ENCODE measurements at regions of chr5 and their contacts with region 1.

Region 1: DNA sequence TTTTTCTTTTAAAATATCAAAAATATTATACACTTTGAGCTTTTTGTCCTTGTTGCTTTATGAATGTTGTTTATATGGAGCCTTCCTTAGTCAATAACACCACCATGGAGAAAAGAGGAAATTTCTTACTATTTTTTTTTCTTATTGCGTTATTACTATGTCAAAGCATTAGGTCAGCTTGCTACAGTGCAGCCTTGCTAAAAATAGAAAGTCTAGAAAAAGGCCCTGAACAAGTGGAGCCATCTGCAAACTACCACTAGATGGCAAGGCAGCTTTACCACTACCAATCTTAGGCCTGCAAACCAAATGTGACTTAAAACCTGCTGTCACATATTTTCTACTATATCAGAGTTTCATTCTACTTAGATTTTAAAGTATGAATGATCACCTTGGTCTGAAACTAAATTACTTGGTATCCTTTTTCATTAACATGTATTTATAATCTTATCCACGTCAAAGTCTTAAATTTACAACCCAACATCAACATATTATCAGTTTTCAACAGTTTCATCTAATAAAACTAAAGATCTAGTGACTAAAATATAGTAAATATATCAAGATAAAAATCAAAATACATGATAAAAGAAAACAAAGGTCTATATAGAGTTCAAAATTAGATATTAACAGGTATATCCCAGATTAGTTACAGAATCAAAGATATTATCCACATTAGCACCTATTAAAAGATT is 113.1 kb upstream of the ACOT12 start:
- DNase-seq: peak; percentile 55 to 72
- ATAC-seq: peak; percentile 100
- H3K4me3 ChIP-seq: no peak overlapping the region
- H3K27ac ChIP-seq: peak overlapping the region; percentile 33 to 50 (median 44)
- H3K4me1 ChIP-seq: peaks cover 4 to 11% of the 10 kb centered on the region in 2 donors
- H3K27me3 ChIP-seq: no peaks in the 10 kb centered on the region
- CTCF ChIP-seq: peak; percentile 69 to 94 (median 86)
- POLR2A ChIP-seq: no peak

Region 2: DNA sequence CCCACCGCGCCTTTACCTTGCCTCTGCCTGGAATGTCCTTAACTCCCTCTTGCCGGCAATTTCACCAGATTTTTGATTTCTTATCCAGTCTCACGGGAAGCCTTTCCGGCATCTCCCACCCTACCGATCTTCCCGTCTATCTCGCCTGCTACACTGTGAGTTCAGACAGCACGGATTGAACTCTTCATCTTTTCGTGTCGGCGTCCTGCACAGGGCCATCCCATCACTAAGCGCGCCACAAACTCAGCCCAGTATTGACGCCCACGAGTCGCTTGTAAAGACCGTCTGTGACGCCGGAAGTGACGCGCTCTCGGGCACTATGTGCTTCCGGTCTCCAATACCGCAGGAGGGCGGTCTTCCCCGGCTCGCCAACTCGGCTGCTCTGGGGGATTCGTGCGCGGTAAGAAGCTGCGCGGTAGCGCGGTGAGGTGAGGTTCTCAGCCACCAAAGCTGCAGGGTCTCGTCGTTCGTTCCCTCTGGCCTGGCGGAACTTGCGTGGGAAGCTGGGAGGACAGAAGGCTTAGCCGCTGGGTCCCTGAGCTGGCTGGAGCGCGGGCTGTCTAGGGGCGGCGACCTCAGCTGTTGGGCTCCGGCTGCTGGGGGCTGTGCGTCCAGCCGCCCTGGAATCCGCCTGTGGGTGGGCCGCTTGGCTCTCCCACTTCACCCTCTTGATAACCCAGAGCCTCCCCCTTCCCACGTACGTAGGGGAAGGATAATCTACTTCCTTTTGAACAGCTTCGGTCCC is 205.6 kb before region 1 on chr5 and contains the start of gene ZCCHC9:
- in situ Hi-C with region 1: no loop called
- intact Hi-C with region 1: loop called (anchors 5 kb)
- DNase-seq: peak; percentile 89
- ATAC-seq: peak; percentile 97 to 98
- H3K4me3 ChIP-seq: peak within 1 kb of the TSS; percentile 83 to 96 (median 87)
- H3K27ac ChIP-seq: peak within 1 kb of the TSS; percentile 87 to 93 (median 88)
- H3K4me1 ChIP-seq: peaks cover 28 to 30% of the 10 kb centered on the region in 2 donors
- H3K27me3 ChIP-seq: no peaks in the 10 kb centered on the region
- CTCF ChIP-seq: peak in 3 of 5 experiments; percentile 13 to 37 (median 31)
- POLR2A ChIP-seq: peak; percentile 58 to 65
- total RNA-seq, gene ZCCHC9: 8.0 to 15.7 (median 12.3) TPM

Region 3: DNA sequence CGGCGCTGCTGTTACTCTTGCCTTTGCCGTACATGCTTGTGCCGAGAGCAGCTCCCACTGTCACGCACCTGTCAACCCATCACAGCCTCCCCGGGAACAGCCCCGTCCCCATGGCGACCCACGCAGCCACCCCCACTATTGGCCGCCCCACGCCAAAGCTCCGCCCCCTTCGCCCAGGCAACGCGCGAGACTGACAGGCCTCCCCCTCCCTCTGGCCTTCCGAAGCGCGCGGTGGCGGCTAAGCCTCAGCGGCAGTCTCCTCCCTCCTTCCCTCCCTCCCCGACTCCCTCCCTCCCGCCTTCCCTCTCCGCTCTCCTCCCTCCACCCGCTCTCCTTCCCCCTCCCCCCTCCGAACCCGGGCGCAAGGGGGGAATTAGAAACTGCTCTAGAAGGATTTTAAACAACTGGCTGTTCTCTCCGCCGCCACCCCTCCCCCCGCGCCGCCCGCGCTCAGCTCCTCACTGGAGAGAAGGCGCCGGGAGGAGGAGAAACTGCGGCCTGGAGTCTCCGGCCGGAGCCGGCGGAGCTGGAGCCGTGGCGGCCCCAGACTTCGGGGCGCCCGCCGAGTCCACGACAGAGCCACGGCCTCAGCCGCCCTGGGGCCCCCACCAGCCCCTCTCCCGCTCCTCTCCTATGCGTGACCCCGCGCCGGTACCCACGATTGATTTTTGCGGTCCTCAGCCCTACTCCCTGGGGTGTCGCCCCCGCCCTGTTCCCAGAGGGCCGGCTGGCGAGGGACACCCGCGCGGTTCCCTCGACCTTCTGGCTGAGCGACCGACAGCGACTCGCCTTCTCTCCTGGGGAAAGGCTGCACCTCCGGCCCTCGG is 244.2 kb after region 1 on chr5 and contains the start of gene SSBP2:
- in situ Hi-C with region 1: loop called (anchors 5 to 25 kb)
- intact Hi-C with region 1: loop called (anchors 1 kb)
- DNase-seq: peak; percentile 98 to 100
- ATAC-seq: peak; percentile 76 to 81
- H3K4me3 ChIP-seq: peak within 1 kb of the TSS; percentile 81 to 84 (median 82)
- H3K27ac ChIP-seq: peak within 1 kb of the TSS; percentile 86 to 99 (median 98)
- H3K4me1 ChIP-seq: peaks cover 41 to 59% of the 10 kb centered on the region in 2 donors
- H3K27me3 ChIP-seq: no peaks in the 10 kb centered on the region
- CTCF ChIP-seq: peak in 1 of 5 experiments; percentile 30
- POLR2A ChIP-seq: peak; percentile 68 to 84
- total RNA-seq, gene SSBP2: 30.4 to 66.5 (median 40.5) TPM

Region 4: GRCh38 chr5:81859624-81860023 is 352.6 kb after region 1 on chr5:
- in situ Hi-C with region 1: loop called in 3 of 4 experiments (anchors 10 kb)
- intact Hi-C with region 1: no loop called
- DNase-seq: no peak
- ATAC-seq: no peak
- H3K4me3 ChIP-seq: no peak overlapping the region
- H3K27ac ChIP-seq: no peak overlapping the region
- H3K4me1 ChIP-seq: peaks cover 21 to 26% of the 10 kb centered on the region in 2 donors
- H3K27me3 ChIP-seq: no peaks in the 10 kb centered on the region
- CTCF ChIP-seq: no peak
- POLR2A ChIP-seq: no peak

Region 5: GRCh38 chr5:81971712-81972495 is 464.9 kb after region 1 on chr5 and contains the start of gene ATG10:
- in situ Hi-C with region 1: loop called in 1 of 4 experiments (anchors 5 kb)
- intact Hi-C with region 1: loop called (anchors 2 kb)
- DNase-seq: peak; percentile 79 to 87
- ATAC-seq: peak; percentile 94 to 96
- H3K4me3 ChIP-seq: peak within 1 kb of the TSS; percentile 79 to 93 (median 82)
- H3K27ac ChIP-seq: peak within 1 kb of the TSS; percentile 93 to 99 (median 98)
- H3K4me1 ChIP-seq: peaks cover 0 to 8% of the 10 kb centered on the region in 2 donors
- H3K27me3 ChIP-seq: no peaks in the 10 kb centered on the region
- CTCF ChIP-seq: peak in 1 of 5 experiments; percentile 9
- POLR2A ChIP-seq: peak; percentile 95 to 97
- total RNA-seq, gene ATG10: 2.9 to 8.5 (median 6.0) TPM

Region 6: GRCh38 chr5:82165740-82166530 is 658.9 kb after region 1 on chr5:
- in situ Hi-C with region 1: loop called in 3 of 4 experiments (anchors 10 kb)
- intact Hi-C with region 1: loop called (anchors 2 kb)
- DNase-seq: peak; percentile 86 to 87
- ATAC-seq: peak; percentile 100
- H3K4me3 ChIP-seq: no peak overlapping the region
- H3K27ac ChIP-seq: peak overlapping the region; percentile 51 to 76 (median 72)
- H3K4me1 ChIP-seq: peaks cover 14 to 25% of the 10 kb centered on the region in 2 donors
- H3K27me3 ChIP-seq: no peaks in the 10 kb centered on the region
- CTCF ChIP-seq: peak; percentile 65 to 78 (median 70)
- POLR2A ChIP-seq: no peak

Region 7: DNA sequence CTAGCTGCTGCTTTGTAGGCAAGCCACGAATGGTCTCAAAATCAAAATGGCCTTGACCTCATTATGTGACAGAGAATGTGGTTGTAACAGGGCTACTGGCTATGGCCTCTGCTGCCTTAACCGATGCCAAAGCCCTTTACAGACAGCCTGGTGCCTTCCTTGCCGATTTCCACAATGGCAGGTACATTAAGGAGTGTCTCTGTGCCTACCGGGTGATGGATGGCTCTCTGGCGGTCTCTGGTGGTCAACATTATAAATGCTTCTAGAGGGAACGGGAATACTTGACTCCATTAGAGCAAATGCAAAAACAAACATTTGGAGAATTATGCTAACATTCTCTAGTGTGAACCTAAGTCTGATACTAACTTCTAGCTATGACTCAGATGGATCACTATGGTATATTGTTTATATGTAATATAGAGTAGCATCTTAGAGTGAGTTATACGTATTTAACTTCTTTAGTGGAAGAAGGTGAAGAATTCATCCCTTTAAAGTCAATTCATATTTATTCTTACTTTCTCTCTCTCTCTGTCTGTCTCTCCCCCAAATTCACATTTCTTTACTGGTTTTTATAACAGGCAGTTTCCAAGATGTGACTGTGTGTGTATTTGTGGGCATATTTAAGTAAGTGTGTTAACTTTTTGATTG is 718.6 kb after region 1 on chr5:
- in situ Hi-C with region 1: loop called in 1 of 4 experiments (anchors 10 kb)
- intact Hi-C with region 1: loop called (anchors 5 kb)
- DNase-seq: peak; percentile 33 to 50
- ATAC-seq: peak; percentile 67 to 95
- H3K4me3 ChIP-seq: no peak overlapping the region
- H3K27ac ChIP-seq: no peak overlapping the region
- H3K4me1 ChIP-seq: no peaks in the 10 kb centered on the region
- H3K27me3 ChIP-seq: no peaks in the 10 kb centered on the region
- CTCF ChIP-seq: peak; percentile 70 to 86 (median 82)
- POLR2A ChIP-seq: no peak